ENCODE measurements at regions of chr2 and their contacts with region 1.

Region 1: DNA sequence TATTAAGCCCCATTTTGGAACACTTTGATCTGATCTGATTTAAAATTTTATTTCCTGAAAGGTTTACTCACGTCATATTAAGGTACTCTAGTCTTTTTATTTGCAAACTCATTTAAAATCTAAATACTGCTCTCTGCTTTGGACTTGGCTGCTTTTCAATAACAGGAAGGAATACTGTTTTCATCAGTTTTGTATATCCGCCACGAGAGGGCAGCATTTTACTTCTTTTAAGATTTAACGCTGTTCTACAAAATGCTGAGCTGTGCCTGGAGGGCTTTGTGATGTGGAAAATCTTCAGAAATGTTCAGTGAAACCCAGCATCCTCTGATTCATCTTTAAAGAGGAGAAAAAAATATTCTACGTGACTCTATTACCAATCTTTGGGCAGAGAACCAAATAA is 37.5 kb upstream of the SLC38A11 start:
- DNase-seq: peak; percentile 13
- CTCF ChIP-seq: peak; percentile 58

Region 2: GRCh38 chr2:164969909-164970690 is 22.7 kb before region 1 on chr2:
- CTCF ChIA-PET with region 1: no interaction called
- POLR2A ChIA-PET with region 1: no interaction called
- DNase-seq: no peak
- CTCF ChIP-seq: no peak

Region 3: GRCh38 chr2:164981217-164981990 is 11.4 kb before region 1 on chr2:
- CTCF ChIA-PET with region 1: interaction called, 13 read pairs
- POLR2A ChIA-PET with region 1: no interaction called
- DNase-seq: no peak
- CTCF ChIP-seq: no peak

Region 4: DNA sequence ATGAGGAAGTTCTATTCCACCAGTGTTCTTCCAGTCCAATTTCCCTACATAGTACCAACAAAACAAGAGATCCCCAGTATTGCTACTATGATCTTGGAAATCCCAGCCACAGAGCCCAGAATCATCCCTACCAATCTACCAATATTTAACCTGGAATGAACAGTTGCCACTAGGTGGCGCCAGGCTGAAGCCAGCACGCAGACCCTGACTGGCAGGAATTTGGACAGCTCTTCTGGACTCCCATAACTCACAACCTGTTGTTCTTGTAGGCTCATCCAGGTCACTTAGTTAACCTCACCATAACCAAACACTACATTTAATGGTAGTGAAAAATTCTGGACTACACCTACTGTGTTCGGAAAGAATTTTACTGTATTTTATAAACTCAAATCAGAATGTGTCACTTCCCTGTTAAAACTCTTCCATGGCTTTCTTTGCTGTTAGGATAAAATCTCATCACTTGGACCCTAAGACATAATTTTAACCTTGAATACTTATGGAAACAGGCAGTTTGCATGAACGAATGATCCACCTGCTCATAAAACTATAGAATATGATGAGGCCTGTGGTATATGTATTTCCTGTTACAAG is 22.3 kb after region 1 on chr2:
- CTCF ChIA-PET with region 1: interaction called, 19 read pairs
- POLR2A ChIA-PET with region 1: no interaction called
- DNase-seq: peak; percentile 54
- CTCF ChIP-seq: peak; percentile 90

Measured in GM10248 (cell line).